Right ventricle myocardium superior (tissue), 1 donor: ENCODE measurements at regions of chr16 and their contacts with region 1.

Region 1: DNA sequence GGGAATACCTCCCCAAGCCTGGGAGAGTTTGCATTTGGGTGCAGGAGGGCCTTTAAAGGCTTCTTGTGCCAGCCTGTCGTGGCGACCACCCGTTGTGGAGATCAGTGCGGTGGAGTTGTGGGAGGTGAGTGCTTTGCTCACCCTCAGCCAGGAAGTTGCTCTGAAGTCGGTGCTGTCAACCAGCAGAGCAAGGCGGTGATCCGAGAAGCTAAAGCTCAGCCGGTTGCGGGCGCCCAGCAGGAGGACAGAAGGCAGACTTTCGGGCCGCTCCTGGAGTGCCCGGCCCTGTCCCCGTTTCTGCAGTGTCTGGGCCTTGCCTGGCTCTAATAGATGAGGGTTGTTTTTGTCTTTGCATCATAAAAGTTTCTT is 1.4 kb downstream of the UBE2I start:
- DNase-seq: no peak
- ATAC-seq: no peak

Region 2: GRCh38 chr16:1331712-1332617 is 21.1 kb after region 1 on chr16:
- intact Hi-C with region 1: loop called (anchors 1 kb)
- DNase-seq: peak; percentile 83
- ATAC-seq: peak; percentile 51

Region 3: DNA sequence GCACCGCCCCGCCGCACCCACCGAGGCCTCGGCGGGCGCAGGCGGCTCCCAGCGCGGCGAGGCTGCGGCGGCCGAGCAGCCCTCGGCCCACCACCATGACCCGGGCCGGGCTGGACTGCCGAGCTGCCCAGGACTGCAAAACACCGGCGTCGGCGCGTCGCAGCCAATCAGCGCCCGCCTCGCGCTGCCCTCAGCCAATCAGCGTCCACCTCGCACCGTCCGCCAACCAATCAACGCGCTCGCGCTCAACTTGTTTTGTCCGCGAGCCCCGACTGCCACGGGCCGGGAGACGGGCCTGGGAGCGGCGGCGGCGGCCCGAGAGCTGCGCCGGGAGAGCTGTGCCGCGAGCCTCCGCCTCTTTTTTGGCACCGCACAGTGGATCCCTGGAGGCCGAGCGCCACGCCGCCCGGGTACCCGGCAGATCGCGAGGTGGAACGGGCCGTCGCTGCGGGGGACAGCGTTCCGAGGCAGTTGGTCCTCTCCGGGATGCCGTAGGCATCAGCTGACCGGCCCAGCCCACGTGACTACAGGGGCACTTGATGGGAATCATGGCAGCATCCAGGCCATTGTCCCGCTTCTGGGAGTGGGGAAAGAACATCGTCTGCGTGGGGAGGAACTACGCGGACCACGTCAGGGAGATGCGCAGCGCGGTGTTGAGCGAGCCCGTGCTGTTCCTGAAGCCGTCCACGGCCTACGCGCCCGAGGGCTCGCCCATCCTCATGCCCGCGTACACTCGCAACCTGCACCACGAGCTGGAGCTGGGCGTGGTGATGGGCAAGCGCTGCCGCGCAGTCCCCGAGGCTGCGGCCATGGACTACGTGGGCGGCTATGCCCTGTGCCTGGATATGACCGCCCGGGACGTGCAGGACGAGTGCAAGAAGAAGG is 516.1 kb after region 1 on chr16 and contains the starts of genes FAHD1 and HAGH:
- intact Hi-C with region 1: no loop called
- DNase-seq: peak; percentile 96
- ATAC-seq: peak; percentile 98
- total RNA-seq, gene FAHD1: 31.0 TPM
- total RNA-seq, gene HAGH: 163 TPM